ENCODE measurements at regions of chr14 and their contacts with region 1.

Region 1: DNA sequence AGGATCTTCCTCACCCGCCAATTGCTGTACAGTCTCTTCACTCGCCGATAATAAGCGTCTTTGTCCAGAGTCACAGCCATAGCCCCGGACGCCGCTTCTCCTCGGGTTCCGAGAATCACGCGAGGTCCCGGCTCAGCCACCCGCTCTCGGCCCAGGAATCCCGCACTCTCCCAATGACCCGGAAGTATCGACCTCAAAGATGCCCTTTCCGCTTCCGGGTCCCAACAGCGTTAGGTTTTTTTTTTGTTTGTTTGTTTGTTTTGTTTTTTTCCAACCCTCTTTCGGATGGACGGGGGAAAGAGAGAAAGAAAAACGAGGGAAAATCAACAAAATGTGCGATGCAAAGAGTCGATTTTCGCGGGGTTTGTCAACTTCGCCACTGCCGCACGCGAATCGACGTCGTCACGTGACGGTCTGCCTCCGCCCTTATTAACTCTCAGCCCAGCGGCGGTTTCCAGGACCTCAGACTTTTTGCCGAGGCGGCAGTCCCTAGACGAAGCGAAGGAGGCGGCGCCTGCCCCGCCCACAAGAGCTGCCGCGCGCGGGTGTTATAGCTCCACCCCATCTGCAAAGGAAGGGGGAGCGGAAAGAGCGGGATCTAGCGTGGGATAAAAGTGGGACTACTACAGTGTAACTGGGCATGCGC is at the start of gene SUPT16H:
- DNase-seq: peak; percentile 85 to 99 (median 88)

Region 2: GRCh38 chr14:21269252-21270046 is 114.5 kb before region 1 on chr14 and contains the start of gene HNRNPC:
- intact Hi-C with region 1: loop called (anchors 5 kb)
- DNase-seq: peak; percentile 99 to 100 (median 100)

Region 3: GRCh38 chr14:21437063-21437901 is 53.3 kb after region 1 on chr14:
- intact Hi-C with region 1: loop called (anchors 10 kb)
- DNase-seq: peak; percentile 98 to 100 (median 99)